ENCODE measurements at regions of chr17 and their contacts with region 1.

Region 1: DNA sequence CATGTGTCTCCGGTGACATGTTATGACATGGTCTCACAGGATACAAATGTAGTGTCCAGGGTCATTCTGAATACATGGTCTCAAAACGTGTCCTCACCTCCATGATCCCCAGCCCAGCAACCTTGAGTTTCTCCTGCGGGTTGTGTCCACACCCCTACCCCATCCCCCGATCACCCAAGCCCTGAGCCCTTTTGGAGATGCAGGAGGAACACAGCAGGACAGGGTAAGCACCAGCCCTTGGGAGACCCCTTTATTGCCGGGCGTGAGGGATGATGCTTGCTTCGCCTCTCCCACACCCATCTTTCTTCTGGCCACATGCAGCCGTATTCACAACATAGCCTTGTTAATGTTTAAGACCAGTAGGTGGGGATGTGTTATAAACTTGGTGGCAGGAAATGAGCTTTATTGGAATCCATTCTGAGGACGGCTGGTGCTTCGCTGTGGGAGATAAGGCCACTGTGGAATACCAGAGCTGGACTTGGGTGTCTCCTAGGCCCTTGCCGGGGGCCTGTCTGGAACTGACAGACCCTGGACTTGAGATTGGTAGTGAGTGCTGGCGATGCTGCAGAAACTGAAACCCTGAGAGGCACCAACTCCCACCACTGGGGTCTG is 5.5 kb downstream of the TMEM132E start:
- DNase-seq: no peak
- H3K4me3 Mint-ChIP-seq: no peak overlapping the region
- H3K27ac Mint-ChIP-seq: no peak overlapping the region
- H3K4me1 Mint-ChIP-seq: peaks cover 8% of the 10 kb centered on the region
- H3K27me3 Mint-ChIP-seq: peaks cover 50% of the 10 kb centered on the region

Region 2: DNA sequence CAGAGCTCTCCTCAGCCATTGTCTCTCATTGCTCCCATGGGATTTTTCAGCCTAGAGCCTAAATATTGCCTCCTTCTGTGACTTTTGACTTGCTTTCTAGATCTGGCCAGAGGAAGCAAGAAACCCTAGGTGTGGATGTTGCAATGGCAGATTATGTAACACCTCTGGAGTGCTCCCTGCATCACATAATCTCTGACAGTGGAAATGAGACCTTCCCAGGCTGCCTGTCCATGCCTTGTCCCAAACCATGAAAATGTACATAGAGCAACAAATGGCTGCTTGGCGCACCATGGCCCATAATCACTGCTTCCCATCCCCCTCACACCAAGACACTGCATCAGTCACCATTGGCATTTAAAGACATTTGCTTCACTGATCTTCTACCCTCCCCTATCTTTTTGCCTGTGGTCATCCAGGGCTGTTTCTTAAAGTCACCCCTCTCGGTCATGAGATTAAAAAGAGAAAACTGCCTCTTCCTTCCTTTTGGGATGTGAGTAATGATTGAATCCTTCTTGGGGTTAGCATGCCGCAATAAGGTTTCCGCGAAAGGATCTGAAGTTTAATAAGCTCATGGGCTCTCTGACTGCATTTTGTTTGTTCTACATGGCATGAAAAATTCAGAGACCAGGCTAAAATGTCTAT is 364.0 kb before region 1 on chr17:
- CTCF ChIA-PET with region 1: no interaction called
- intact Hi-C with region 1: no loop called
- DNase-seq: no peak
- H3K4me3 Mint-ChIP-seq: no peak overlapping the region
- H3K27ac Mint-ChIP-seq: no peak overlapping the region
- H3K4me1 Mint-ChIP-seq: no peaks in the 10 kb centered on the region
- H3K27me3 Mint-ChIP-seq: peaks cover 36% of the 10 kb centered on the region

Region 3: DNA sequence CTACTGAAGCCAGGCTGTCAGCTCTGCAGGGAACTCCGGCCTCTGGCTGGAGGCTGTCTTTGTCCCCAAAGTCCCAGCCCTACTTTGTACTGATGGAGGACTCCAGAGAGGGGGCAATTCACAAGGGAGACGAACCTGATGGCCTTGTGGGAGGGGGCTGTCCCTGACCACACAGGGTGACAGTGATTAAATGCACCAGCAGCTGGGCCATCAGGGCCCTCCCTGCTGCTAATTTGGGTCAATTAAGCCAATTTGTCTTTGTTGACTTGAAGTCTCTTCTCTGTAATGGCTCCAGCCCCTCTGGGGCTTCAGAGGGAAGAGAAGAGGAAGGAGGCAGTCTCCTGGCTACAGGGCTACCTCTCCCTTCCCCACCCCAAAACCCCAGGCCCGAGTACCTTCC is 16.5 kb after region 1 on chr17:
- CTCF ChIA-PET with region 1: no interaction called
- intact Hi-C with region 1: loop called (anchors 1 kb)
- DNase-seq: no peak
- H3K4me3 Mint-ChIP-seq: no peak overlapping the region
- H3K27ac Mint-ChIP-seq: no peak overlapping the region
- H3K4me1 Mint-ChIP-seq: no peaks in the 10 kb centered on the region
- H3K27me3 Mint-ChIP-seq: peaks cover 2% of the 10 kb centered on the region